ENCODE measurements at regions of chr10 and their contacts with region 1.

Region 1: DNA sequence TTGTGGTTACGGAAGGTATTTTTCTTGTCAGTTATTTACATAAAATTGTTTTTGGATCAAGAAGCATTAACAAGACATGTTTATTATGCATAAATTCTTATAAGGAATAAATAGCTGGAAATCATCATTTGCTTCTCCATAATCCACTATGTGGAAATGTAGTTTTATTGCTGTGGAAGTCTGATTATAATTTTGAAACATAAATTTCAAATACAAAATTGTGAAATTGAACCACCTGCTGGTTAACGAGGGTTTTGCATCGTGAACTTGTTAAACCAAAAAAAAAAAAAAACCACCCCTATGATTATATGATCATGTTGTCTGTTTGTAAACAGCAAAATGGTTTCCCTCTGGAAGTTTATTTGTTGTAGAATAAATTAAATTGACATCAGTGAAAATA is 25.9 kb downstream of the ABRAXAS2 start:
- DNase-seq: peak; percentile 28
- H3K4me3 ChIP-seq: no peak overlapping the region
- H3K27ac ChIP-seq: no peak overlapping the region
- H3K4me1 ChIP-seq: no peaks in the 10 kb centered on the region
- H3K27me3 ChIP-seq: no peaks in the 10 kb centered on the region
- CTCF ChIP-seq: peak; percentile 28 to 67 (median 33)
- POLR2A ChIP-seq: no peak

Region 2: DNA sequence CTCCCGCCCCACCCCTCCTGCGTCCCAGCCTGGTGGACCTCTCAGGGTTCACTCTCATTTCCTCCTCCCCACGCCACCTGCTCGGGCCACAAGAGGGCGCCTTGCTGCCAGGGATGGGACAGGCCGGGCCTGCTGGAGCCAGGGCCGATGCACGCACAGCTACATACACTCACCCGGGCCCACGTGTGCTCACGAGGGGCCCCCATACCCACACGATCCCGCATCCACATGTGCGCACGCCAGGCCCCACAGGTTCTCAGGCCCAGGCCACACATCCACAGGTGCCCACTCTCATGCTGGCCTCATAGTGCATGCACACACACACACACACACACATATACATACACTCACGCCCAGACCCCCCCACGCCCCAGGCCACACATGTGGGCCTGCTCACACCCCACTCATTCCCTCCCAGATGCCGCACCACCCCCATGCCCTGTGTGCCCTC is 297.2 kb before region 1 on chr10:
- intact Hi-C with region 1: loop called (anchors 10 kb)
- DNase-seq: peak; percentile 90
- H3K4me3 ChIP-seq: no peak overlapping the region
- H3K27ac ChIP-seq: no peak overlapping the region
- H3K4me1 ChIP-seq: peaks cover 35% of the 10 kb centered on the region
- H3K27me3 ChIP-seq: no peaks in the 10 kb centered on the region
- CTCF ChIP-seq: peak; percentile 62 to 85 (median 83)
- POLR2A ChIP-seq: no peak

Measured in testis (tissue), 5 donors.